ENCODE measurements at regions of chr2 and their contacts with region 1.

Region 1: DNA sequence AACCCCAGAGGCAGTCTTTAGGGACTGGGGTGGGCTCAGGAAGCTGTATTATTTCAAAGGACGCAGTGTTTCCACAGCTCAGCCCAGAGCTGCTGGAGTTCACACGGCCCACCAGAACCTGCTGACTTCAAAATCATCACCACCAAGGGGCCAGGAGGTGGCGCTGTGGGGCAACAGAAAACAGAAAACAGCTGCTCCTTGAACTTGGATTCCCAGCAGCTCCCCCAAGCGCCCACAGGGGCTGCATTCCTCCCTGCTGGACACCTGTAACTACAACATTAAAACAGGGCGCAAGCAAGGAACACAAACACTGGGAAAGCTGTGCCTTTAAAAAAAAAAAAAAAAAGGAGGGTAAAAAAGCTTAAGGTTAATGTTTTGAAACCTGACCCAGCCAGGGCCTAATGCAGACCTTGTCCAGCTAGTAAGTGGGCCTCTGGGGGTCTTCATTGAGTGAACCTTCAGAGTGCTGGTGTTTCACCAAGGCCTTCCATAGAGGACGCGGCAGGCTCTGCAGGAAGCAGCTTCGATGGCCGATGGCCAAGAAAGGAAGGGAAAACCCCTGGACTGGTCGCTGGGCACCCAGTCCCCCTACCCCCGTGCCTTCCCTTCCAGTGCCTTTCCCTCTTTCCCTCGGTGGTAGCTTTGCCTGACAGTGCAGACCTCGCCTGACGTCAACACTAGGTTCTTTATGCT is 25.9 kb downstream of the MLPH start:
- DNase-seq: peak; percentile 87
- H3K4me3 Mint-ChIP-seq: no peak overlapping the region
- H3K27ac Mint-ChIP-seq: no peak overlapping the region
- H3K4me1 Mint-ChIP-seq: no peaks in the 10 kb centered on the region
- H3K27me3 Mint-ChIP-seq: peaks cover 14% of the 10 kb centered on the region

Region 2: DNA sequence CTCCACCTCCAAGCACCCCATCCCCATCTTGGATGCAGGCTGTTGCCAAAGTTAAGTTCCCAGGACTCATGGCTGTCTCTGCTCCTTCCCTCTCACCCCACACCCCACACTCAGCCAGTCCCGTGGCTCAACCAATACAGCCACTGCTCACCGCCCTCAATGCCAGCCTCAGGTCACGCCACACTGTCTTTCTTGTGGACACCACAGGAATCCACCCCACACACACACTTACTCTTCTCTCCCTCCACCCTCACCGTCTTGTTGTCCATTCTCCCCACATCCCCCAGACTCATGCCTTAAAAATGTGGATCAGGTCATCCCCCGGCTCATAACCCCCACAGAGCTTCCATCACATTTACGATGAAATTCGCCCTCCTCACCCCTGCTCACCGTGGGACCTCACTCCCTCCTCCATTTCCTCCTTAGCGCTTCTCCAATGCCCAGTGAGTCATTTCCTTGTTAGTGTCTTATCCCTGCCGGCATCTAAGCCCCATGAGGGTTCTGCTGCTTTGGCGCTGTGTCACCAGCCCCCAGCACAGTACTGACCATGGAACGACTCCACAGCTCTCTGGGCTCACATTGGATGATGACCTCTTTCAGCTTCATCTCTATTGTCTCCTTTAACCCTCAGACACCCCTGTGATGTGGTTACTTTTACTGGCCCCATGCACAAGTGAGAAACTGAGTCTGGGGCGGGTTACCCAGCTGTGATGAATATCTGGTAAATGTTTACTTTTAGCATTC is 12.1 kb before region 1 on chr2:
- CTCF ChIA-PET with region 1: interaction called, 16 read pairs
- DNase-seq: no peak
- H3K4me3 Mint-ChIP-seq: no peak overlapping the region
- H3K27ac Mint-ChIP-seq: no peak overlapping the region
- H3K4me1 Mint-ChIP-seq: peaks cover 3% of the 10 kb centered on the region
- H3K27me3 Mint-ChIP-seq: peaks cover 44% of the 10 kb centered on the region

Region 3: GRCh38 chr2:237581751-237582746 is 69.1 kb after region 1 on chr2:
- CTCF ChIA-PET with region 1: interaction called, 215 read pairs
- DNase-seq: peak; percentile 67
- H3K4me3 Mint-ChIP-seq: no peak overlapping the region
- H3K27ac Mint-ChIP-seq: no peak overlapping the region
- H3K4me1 Mint-ChIP-seq: peaks cover 6% of the 10 kb centered on the region
- H3K27me3 Mint-ChIP-seq: peaks cover 13% of the 10 kb centered on the region

Measured in activated naive CD4-positive, alpha-beta T cell treated with anti-CD3 and anti-CD28 coated beads, Interleukin-2, amount 10 ng/mL, durations not matched to agents 7 days and 5 days (primary cell).